Dorsolateral prefrontal cortex (tissue), 120 donors: ENCODE measurements at regions of chr2 and their contacts with region 1.

Region 1: GRCh38 chr2:218395797-218396687 is 3.6 kb upstream of the CTDSP1 start:
- DNase-seq: peak; percentile 84 to 96 (median 92)
- H3K4me3 ChIP-seq: peak overlapping the region; percentile 62 to 99 (median 94)
- H3K27ac ChIP-seq: peak overlapping the region; percentile 91 to 100 (median 99)
- H3K27me3 ChIP-seq: peaks cover 0 to 5% (median 0%) of the 10 kb centered on the region in 45 donors
- CTCF ChIP-seq: peak; percentile 66 to 98 (median 91)

Region 2: GRCh38 chr2:218216674-218217359 is 179.2 kb before region 1 on chr2 and contains the start of gene ARPC2:
- intact Hi-C with region 1: loop called (anchors 2 to 5 kb)
- DNase-seq: peak; percentile 85 to 94 (median 92)
- H3K4me3 ChIP-seq: peak within 1 kb of the TSS; percentile 49 to 98 (median 89)
- H3K27ac ChIP-seq: peak within 1 kb of the TSS; percentile 72 to 98 (median 92)
- H3K27me3 ChIP-seq: no peaks in the 10 kb centered on the region
- CTCF ChIP-seq: peak in 33 of 56 donors; percentile 6 to 54 (median 31)
- total RNA-seq, gene ARPC2: 85.6 to 183 (median 139) TPM

Region 3: GRCh38 chr2:218292048-218293014 is 103.7 kb before region 1 on chr2 and contains the start of gene TMBIM1:
- intact Hi-C with region 1: loop called in 1 of 2 experiments (anchors 5 kb)
- DNase-seq: peak in 9 of 10 donors; percentile 36 to 83 (median 50)
- H3K4me3 ChIP-seq: peak within 1 kb of the TSS; percentile 62 to 93 (median 80)
- H3K27ac ChIP-seq: peak within 1 kb of the TSS; percentile 79 to 100 (median 98)
- H3K27me3 ChIP-seq: no peaks in the 10 kb centered on the region
- CTCF ChIP-seq: peak in 55 of 56 donors; percentile 41 to 97 (median 81)
- total RNA-seq, gene TMBIM1: 38.7 to 279 (median 82.0) TPM

Region 4: GRCh38 chr2:220034426-220035130 is 1638.5 kb after region 1 on chr2:
- intact Hi-C with region 1: no loop called
- DNase-seq: peak in 6 of 10 donors; percentile 7 to 56 (median 50)
- H3K4me3 ChIP-seq: no peak overlapping the region
- H3K27ac ChIP-seq: peak overlapping the region in 32 of 59 donors; percentile 0 to 78 (median 51)
- H3K27me3 ChIP-seq: no peaks in the 10 kb centered on the region
- CTCF ChIP-seq: no peak